ENCODE measurements at regions of chr6 and their contacts with region 1.

Region 1: GRCh38 chr6:142845624-142846458 is 99.1 kb downstream of the HIVEP2 start:
- DNase-seq: no peak
- ATAC-seq: peak; percentile 23
- H3K4me3 ChIP-seq: peak overlapping the region; percentile 48; the same call in 1 of the 2 replicates
- H3K27ac ChIP-seq: peak overlapping the region; percentile 98
- H3K4me1 ChIP-seq: peaks cover 81% of the 10 kb centered on the region
- H3K27me3 ChIP-seq: no peaks in the 10 kb centered on the region
- CTCF ChIP-seq: no peak
- EP300 ChIP-seq: no peak
- POLR2A ChIP-seq: peak; percentile 67
- RAD21 ChIP-seq: no peak

Region 2: DNA sequence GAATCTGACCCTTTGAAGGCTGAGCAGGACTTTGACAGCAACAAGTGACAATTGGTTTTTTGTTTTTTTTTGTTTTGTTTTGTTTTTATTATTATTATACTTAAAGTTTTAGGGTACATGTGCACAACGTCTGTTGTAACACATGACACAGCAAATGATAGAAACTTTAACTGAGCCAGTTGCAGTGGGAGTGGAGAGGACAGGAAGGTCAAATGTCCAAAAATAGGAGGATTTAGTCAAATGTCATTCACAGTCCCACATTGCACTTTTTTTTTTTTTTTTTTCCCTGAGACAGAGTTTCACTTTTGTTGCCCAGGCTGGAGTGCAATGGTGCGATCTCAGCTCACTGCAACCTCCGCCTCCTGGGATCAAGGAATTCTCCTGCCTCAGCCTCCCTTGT is 123.8 kb before region 1 on chr6:
- CTCF ChIA-PET with region 1: no interaction called
- POLR2A ChIA-PET with region 1: no interaction called
- RAD21 ChIA-PET with region 1: no interaction called
- SMC1A ChIA-PET with region 1: no interaction called
- in situ Hi-C with region 1: no loop called
- intact Hi-C with region 1: no loop called
- DNase-seq: no peak
- ATAC-seq: peak; percentile 25
- H3K4me3 ChIP-seq: no peak overlapping the region
- H3K27ac ChIP-seq: no peak overlapping the region
- H3K4me1 ChIP-seq: peaks cover 10% of the 10 kb centered on the region
- H3K27me3 ChIP-seq: no peaks in the 10 kb centered on the region
- CTCF ChIP-seq: no peak
- EP300 ChIP-seq: no peak
- POLR2A ChIP-seq: no peak
- RAD21 ChIP-seq: no peak

Region 3: GRCh38 chr6:142746524-142746923 is 99.3 kb before region 1 on chr6:
- CTCF ChIA-PET with region 1: interaction called, 11 read pairs
- POLR2A ChIA-PET with region 1: no interaction called
- RAD21 ChIA-PET with region 1: interaction called, 3 read pairs
- SMC1A ChIA-PET with region 1: interaction called, 9 read pairs
- in situ Hi-C with region 1: no loop called
- intact Hi-C with region 1: loop called (anchors 2 kb)
- DNase-seq: no peak
- ATAC-seq: peak; percentile 92
- H3K4me3 ChIP-seq: no peak overlapping the region
- H3K27ac ChIP-seq: no peak overlapping the region
- H3K4me1 ChIP-seq: no peaks in the 10 kb centered on the region
- H3K27me3 ChIP-seq: no peaks in the 10 kb centered on the region
- CTCF ChIP-seq: peak; percentile 46 to 60 (median 56); a peak in 5 of 6 replicates
- EP300 ChIP-seq: no peak
- POLR2A ChIP-seq: no peak
- RAD21 ChIP-seq: peak; percentile 67

Region 4: DNA sequence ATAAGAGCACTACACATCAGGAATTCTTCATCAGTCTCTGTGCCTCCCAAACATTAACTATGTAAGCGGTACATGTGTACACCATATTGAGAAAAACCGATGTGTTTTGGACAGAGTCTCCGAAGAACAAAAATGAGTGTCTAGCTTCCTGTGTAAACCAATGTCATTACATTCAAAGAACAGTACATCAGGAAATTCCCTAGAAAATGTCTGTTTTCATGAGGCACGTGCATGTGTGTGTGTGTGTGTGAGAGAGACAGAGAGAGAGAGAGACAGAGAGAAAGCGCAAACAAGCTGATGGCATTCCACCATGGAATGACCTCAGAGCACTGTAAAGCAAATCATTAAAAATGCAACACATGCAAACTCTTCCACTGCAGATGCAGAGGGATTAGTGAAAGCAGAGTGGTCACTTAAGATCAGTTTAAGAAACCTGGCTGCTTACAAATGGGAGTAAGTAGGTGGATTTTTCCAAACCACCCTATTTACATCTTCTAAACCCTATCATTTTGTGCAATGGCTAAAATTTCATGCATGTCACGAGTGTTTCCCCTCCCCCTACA is 34.8 kb before region 1 on chr6:
- CTCF ChIA-PET with region 1: no interaction called
- POLR2A ChIA-PET with region 1: no interaction called
- RAD21 ChIA-PET with region 1: interaction called, 374 read pairs
- SMC1A ChIA-PET with region 1: interaction called, 10 read pairs
- in situ Hi-C with region 1: no loop called
- intact Hi-C with region 1: no loop called
- DNase-seq: no peak
- ATAC-seq: peak; percentile 61
- H3K4me3 ChIP-seq: no peak overlapping the region
- H3K27ac ChIP-seq: peak overlapping the region; percentile 17
- H3K4me1 ChIP-seq: peaks cover 13% of the 10 kb centered on the region
- H3K27me3 ChIP-seq: no peaks in the 10 kb centered on the region
- CTCF ChIP-seq: no peak
- EP300 ChIP-seq: peak; percentile 28 to 37; a peak in 2 of 4 replicates
- POLR2A ChIP-seq: no peak
- RAD21 ChIP-seq: no peak

Region 5: DNA sequence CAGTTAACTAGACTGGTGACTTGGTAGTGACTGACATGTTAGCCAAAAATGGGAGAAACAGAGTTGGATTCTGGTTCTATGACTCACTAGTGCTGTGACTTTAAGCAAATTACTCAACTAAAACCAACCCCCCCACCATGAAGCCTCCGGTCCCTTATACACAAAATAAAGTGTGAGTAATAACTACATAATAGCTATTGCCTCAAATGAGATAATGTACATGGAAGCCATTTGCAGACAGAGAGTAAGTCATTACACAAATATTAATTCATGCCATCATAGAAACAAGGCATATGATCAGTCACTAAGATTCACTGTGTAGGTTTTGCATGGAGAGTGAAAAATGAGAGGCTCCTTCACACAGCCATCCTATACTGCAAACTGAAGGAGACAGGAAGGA is 12.8 kb before region 1 on chr6:
- CTCF ChIA-PET with region 1: interaction called, 4 read pairs
- POLR2A ChIA-PET with region 1: interaction called, 9 read pairs
- RAD21 ChIA-PET with region 1: interaction called, 374 read pairs
- SMC1A ChIA-PET with region 1: interaction called, 449 read pairs
- in situ Hi-C with region 1: no loop called
- intact Hi-C with region 1: no loop called
- DNase-seq: no peak
- ATAC-seq: peak; percentile 50
- H3K4me3 ChIP-seq: no peak overlapping the region
- H3K27ac ChIP-seq: no peak overlapping the region
- H3K4me1 ChIP-seq: 0 out of 2 replicates have a peak, but pooled peaks cover 2% of the 10 kb centered on the region
- H3K27me3 ChIP-seq: no peaks in the 10 kb centered on the region
- CTCF ChIP-seq: no peak
- EP300 ChIP-seq: no peak
- POLR2A ChIP-seq: no peak
- RAD21 ChIP-seq: no peak

Region 6: DNA sequence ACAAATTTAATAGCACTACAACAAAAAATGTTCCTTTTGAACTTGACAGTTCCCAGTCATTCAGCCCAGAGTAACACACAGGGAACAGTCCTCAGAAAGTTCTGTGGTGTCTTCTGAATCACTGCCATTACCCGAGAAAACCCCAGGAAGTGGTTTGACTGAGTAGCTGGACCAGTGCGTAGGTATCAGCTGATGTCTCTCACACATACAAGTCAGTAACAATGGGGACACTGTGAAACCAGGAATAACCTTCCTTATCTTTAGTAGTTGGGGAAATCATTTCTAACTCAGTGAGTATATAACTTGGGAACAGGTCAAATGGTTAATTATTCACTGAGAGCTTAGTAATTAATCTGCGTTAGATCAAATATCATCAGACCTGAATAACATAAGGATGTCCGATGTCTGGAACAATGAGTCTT is 26.1 kb after region 1 on chr6:
- CTCF ChIA-PET with region 1: interaction called, 5 read pairs
- POLR2A ChIA-PET with region 1: interaction called, 10 read pairs
- RAD21 ChIA-PET with region 1: interaction called, 17 read pairs
- SMC1A ChIA-PET with region 1: interaction called, 12 read pairs
- in situ Hi-C with region 1: no loop called
- intact Hi-C with region 1: loop called (anchors 1 kb)
- DNase-seq: no peak
- ATAC-seq: peak; percentile 88
- H3K4me3 ChIP-seq: no peak overlapping the region
- H3K27ac ChIP-seq: peak overlapping the region; percentile 50
- H3K4me1 ChIP-seq: peaks cover 35% of the 10 kb centered on the region
- H3K27me3 ChIP-seq: no peaks in the 10 kb centered on the region
- CTCF ChIP-seq: no peak
- EP300 ChIP-seq: peak; percentile 81 to 87
- POLR2A ChIP-seq: no peak
- RAD21 ChIP-seq: no peak; the same call in 1 of the 2 replicates

Region 7: GRCh38 chr6:142913511-142914047 is 67.7 kb after region 1 on chr6:
- CTCF ChIA-PET with region 1: interaction called, 3 read pairs
- POLR2A ChIA-PET with region 1: interaction called, 4 read pairs
- RAD21 ChIA-PET with region 1: interaction called, 5 read pairs
- SMC1A ChIA-PET with region 1: interaction called, 5 read pairs
- in situ Hi-C with region 1: no loop called
- intact Hi-C with region 1: loop called (anchors 1 kb)
- DNase-seq: peak; percentile 94
- ATAC-seq: peak; percentile 89
- H3K4me3 ChIP-seq: peak overlapping the region; percentile 27
- H3K27ac ChIP-seq: peak overlapping the region; percentile 95
- H3K4me1 ChIP-seq: peaks cover 32% of the 10 kb centered on the region
- H3K27me3 ChIP-seq: no peaks in the 10 kb centered on the region
- CTCF ChIP-seq: peak; percentile 11 to 27 (median 26); a peak in 3 of 6 replicates
- EP300 ChIP-seq: peak; percentile 72 to 97; a peak in 3 of 4 replicates
- POLR2A ChIP-seq: peak; percentile 43; the same call in 1 of the 2 replicates
- RAD21 ChIP-seq: peak; percentile 53

Region 8: DNA sequence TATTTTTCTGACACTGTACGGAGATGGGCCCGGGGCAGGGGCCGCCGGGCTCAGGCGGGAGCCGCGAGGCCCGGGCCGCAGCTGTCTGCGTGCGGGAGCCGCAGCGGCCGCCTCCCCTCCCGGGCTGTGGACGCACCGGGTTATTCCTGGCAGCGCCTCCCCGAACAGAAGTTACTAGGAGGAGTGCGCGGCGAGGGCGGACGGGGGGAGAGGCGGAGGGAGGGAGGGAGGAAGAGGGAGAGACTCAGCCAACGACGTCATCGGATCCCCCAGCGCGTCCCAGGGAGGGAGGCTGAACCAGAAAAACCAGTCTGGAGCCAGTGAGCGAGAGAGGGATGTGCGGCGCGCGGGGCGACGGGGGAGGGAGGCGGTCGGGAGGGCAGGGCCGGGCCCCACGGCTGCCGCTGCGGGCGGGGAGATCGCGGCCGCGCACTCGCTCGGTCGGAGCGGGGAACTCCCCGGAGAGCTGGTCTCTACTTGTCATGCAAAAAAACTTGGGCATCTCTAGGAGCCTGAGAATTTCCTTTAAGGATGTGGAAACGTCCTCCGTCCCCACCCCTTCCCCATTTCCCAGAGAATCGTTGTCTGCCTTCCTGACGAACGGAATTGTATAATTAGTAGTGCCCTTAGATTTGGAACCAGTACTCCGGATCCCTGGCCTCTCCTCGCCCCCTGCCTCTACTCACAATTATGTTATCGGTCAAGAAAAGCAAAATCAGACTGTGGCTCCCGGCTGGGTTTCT is 100.5 kb after region 1 on chr6:
- CTCF ChIA-PET with region 1: interaction called, 7 read pairs
- POLR2A ChIA-PET with region 1: interaction called, 5 read pairs
- RAD21 ChIA-PET with region 1: interaction called, 9 read pairs
- SMC1A ChIA-PET with region 1: interaction called, 7 read pairs
- in situ Hi-C with region 1: loop called (anchors 5 kb)
- intact Hi-C with region 1: loop called (anchors 2 kb)
- DNase-seq: no peak
- ATAC-seq: peak; percentile 51
- H3K4me3 ChIP-seq: peak overlapping the region; percentile 94
- H3K27ac ChIP-seq: peak overlapping the region; percentile 98
- H3K4me1 ChIP-seq: peaks cover 9% of the 10 kb centered on the region; the same call in 1 of the 2 replicates
- H3K27me3 ChIP-seq: no peaks in the 10 kb centered on the region
- CTCF ChIP-seq: no peak
- EP300 ChIP-seq: no peak; a peak in 1 of 4 replicates
- POLR2A ChIP-seq: peak; percentile 52; the same call in 1 of the 2 replicates
- RAD21 ChIP-seq: no peak